WTC11 (cell line): ENCODE measurements at regions of chr22 and their contacts with region 1.

Region 1: GRCh38 chr22:38766076-38766777 is 10.4 kb upstream of the SUN2 start:
- DNase-seq: peak; percentile 84
- ATAC-seq: peak; percentile 90
- H3K4me3 Mint-ChIP-seq: no peak overlapping the region
- H3K27ac Mint-ChIP-seq: no peak overlapping the region
- H3K4me1 Mint-ChIP-seq: 0 out of 2 replicates have a peak, but pooled peaks cover 1% of the 10 kb centered on the region
- H3K27me3 Mint-ChIP-seq: no peaks in the 10 kb centered on the region
- CTCF ChIP-seq: peak; percentile 66

Region 2: GRCh38 chr22:38733329-38733723 is 32.9 kb before region 1 on chr22:
- CTCF ChIA-PET with region 1: interaction called, 22 read pairs
- POLR2A ChIA-PET with region 1: no interaction called
- DNase-seq: peak; percentile 72
- ATAC-seq: peak; percentile 77
- H3K4me3 Mint-ChIP-seq: no peak overlapping the region
- H3K27ac Mint-ChIP-seq: peak overlapping the region; percentile 65; the same call in 1 of the 2 replicates
- H3K4me1 Mint-ChIP-seq: 0 out of 2 replicates have a peak, but pooled peaks cover 3% of the 10 kb centered on the region
- H3K27me3 Mint-ChIP-seq: no peaks in the 10 kb centered on the region
- CTCF ChIP-seq: peak; percentile 76

Region 3: GRCh38 chr22:38782402-38783094 is 16.3 kb after region 1 on chr22:
- CTCF ChIA-PET with region 1: interaction called, 60 read pairs
- POLR2A ChIA-PET with region 1: no interaction called
- DNase-seq: no peak
- ATAC-seq: peak; percentile 84
- H3K4me3 Mint-ChIP-seq: no peak overlapping the region
- H3K27ac Mint-ChIP-seq: no peak overlapping the region
- H3K4me1 Mint-ChIP-seq: peaks cover 5% of the 10 kb centered on the region
- H3K27me3 Mint-ChIP-seq: no peaks in the 10 kb centered on the region
- CTCF ChIP-seq: no peak

Region 4: GRCh38 chr22:38835888-38836301 is 69.7 kb after region 1 on chr22:
- CTCF ChIA-PET with region 1: interaction called, 50 read pairs
- POLR2A ChIA-PET with region 1: no interaction called
- DNase-seq: no peak
- ATAC-seq: no peak
- H3K4me3 Mint-ChIP-seq: peak overlapping the region; percentile 5; the same call in 1 of the 2 replicates
- H3K27ac Mint-ChIP-seq: peak overlapping the region; percentile 44; the same call in 1 of the 2 replicates
- H3K4me1 Mint-ChIP-seq: peaks cover 27% of the 10 kb centered on the region
- H3K27me3 Mint-ChIP-seq: peaks cover 12% of the 10 kb centered on the region
- CTCF ChIP-seq: no peak

Region 5: DNA sequence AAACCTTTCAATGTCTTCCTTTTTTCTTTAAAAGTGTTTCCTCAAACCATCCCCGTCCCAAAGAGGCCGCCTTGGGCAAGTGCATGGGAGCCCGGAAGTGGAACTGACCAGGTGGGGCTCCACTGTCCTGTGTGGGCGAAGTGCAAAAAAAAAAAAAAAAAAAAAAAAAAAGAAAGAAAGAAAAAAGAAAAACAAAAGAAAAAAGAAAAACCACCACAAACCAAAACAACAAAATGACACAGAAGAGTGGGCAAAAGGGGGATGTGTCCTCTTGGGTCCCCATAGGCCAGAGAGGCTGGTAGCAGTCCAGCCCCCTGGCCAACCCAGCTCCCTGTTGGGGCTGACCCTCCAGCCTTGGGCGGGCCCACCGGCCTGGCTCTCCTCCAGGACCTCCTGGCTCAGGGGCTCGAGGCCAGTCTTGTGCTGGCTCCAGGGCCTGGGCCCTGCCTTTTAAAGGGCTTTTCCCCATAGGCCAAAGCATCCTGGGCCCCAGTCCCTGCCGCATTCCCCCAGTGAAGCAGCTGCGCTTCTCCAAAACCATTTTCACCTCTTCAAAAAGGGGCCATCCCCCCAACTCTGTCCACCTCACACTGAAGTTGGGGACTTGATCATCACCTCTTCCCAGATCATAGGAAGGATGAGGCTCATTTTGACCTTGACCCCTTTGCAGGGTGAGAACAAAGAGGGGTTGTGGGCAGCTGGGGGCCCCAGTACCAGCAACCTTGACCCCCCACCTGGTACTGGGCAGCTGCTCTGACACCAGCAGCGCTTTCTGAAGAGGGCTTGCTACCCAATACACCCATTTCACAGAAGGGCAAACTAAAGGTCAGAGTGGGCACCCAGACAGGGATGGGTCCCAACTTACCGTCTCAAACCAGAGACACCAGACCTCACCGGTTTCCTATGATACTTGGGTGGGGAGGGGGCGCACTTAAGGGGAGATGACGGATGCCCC is 96.4 kb after region 1 on chr22:
- CTCF ChIA-PET with region 1: interaction called, 83 read pairs
- POLR2A ChIA-PET with region 1: interaction called, 4 read pairs
- DNase-seq: peak; percentile 41
- ATAC-seq: peak; percentile 19
- H3K4me3 Mint-ChIP-seq: no peak overlapping the region
- H3K27ac Mint-ChIP-seq: no peak overlapping the region; the same call in 1 of the 2 replicates
- H3K4me1 Mint-ChIP-seq: peaks cover 36% of the 10 kb centered on the region
- H3K27me3 Mint-ChIP-seq: no peaks in the 10 kb centered on the region; the same call in 1 of the 2 replicates
- CTCF ChIP-seq: no peak

Region 6: DNA sequence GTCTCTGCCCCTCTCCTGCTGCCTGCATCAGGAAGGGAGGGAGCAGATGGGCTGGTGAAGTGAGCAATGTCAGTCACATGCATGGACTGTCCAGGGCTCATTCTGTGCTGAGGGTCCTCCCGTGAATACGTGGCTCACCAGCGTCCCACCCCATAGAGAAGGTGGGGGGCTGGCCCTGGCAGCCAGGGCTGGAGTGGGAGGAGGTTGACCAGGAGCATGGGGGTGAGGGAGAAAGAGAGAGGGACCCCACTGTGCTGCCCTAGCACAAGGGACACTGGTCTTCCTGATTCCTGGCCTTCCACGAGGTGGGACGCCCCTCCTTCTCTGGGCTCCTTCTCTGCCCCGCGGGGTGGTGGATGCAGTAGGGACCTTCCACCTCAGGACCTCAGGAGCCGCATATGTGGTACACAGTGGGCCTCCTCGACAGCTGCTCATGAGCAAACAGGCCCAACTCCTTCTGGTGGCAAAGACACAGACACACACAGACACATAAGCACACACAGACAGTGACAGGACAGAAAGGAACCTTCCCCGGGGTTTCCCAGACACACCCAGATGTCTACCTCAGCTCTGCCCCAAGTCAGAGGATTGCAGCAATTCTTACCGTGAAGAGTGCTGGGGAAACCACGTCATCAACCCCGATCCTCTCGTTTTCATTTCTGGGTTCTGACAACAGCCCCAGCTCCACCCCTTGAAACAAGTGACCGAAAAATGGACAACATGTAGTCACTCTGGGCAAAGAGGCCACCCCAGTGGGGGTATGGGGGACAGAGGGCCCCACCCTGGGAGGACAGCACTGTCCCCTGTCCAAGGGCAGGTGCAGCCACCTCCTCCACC is 187.6 kb after region 1 on chr22:
- CTCF ChIA-PET with region 1: interaction called, 18 read pairs
- POLR2A ChIA-PET with region 1: no interaction called
- DNase-seq: no peak
- ATAC-seq: no peak
- H3K4me3 Mint-ChIP-seq: no peak overlapping the region
- H3K27ac Mint-ChIP-seq: no peak overlapping the region
- H3K4me1 Mint-ChIP-seq: peaks cover 3% of the 10 kb centered on the region; the same call in 1 of the 2 replicates
- H3K27me3 Mint-ChIP-seq: peaks cover 1% of the 10 kb centered on the region
- CTCF ChIP-seq: no peak